ENCODE measurements at regions of chrX and their contacts with region 1.

Region 1: DNA sequence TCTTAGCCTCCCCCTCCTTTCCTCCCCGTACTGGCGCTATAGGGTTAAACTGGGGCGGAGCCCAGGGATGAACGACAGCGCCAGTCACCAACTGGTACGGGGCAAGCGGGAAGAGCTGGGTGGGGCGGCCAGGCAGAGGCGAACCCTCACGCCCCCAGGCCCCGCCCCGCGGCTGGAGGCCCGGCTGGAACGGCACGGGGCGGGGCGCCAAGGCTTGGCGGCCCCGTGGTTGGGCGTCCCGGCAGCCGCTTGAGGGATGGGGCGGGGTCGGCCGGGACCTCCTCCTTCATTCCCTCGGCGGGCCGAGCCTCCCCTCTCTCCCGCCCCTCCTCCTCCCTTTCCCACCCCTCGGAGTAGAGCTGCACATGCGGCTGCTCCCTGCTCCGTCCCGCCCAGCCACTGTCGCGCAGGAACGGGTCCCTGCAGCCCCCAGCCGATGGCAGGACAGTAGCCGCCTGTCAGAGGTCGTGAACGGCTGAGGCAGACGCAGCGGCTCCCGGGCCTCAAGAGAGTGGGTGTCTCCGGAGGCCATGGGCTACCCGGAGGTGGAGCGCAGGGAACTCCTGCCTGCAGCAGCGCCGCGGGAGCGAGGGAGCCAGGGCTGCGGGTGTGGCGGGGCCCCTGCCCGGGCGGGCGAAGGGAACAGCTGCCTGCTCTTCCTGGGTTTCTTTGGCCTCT is at the start of gene EDA:
- DNase-seq: peak; percentile 60 to 72
- ATAC-seq: peak; percentile 87 to 88
- H3K4me3 ChIP-seq: peak within 1 kb of the TSS; percentile 66 to 84 (median 73)
- H3K27ac ChIP-seq: peak within 1 kb of the TSS; percentile 47 to 69 (median 56)
- H3K4me1 ChIP-seq: peaks cover 3 to 5% of the 10 kb centered on the region in 2 donors
- H3K27me3 ChIP-seq: no peaks in the 10 kb centered on the region
- CTCF ChIP-seq: no peak
- POLR2A ChIP-seq: no peak
- total RNA-seq, gene EDA: 0.51 to 3.3 (median 1.3) TPM

Region 2: DNA sequence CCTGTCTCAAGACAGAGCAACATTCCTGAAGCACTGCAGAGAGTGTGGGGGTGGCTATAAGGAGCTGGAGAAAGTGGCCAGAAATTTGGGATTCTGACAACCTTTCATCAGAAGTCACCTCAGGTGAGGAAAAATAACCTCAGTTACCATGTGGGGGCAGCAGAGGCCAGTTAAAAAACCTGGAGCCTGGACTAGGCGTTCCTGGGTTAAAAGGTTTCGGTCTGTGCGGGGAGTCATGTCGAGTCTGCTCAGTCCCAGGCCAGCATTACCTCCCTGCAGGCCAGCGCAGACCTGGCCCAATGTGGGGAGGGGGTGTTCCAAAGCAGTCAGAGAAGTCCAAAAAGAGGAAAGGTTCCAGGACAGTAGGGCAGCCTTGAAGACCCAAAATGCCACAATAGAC is 122.7 kb before region 1 on chrX:
- in situ Hi-C with region 1: no loop called
- intact Hi-C with region 1: loop called (anchors 2 kb)
- DNase-seq: no peak
- ATAC-seq: no peak
- H3K4me3 ChIP-seq: no peak overlapping the region
- H3K27ac ChIP-seq: no peak overlapping the region
- H3K4me1 ChIP-seq: no peaks in the 10 kb centered on the region
- H3K27me3 ChIP-seq: no peaks in the 10 kb centered on the region
- CTCF ChIP-seq: peak in 3 of 5 experiments; percentile 25 to 41 (median 41)
- POLR2A ChIP-seq: no peak

Region 3: DNA sequence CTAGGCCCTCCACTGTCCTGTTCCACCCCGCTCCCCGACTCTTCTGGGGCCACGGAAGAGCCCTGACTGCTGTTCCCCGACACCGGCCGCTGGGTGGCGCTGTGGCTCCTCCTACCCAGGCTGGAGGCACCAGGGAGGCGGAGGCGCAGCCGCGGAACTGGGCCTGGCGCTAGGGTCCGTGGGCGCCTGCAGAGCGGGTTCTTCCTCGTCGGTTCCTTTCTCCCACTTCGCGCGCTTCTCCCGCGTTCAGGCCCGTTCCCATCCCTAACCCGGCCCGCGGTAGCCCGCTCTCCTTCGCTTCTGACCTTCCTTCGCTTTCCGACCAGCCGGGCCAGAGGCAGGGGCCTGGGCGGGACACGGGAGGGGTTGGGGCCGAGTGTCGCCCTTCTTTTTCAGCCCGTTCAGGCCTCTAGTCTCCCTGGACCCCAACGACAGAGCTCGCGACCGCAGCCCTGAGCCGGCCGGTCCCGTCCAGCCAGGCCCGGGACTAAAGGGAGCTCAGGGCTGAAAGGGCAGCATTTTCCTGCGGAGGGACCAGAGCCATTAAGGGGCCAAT is 77.5 kb before region 1 on chrX:
- in situ Hi-C with region 1: no loop called
- intact Hi-C with region 1: loop called (anchors 1 kb)
- DNase-seq: peak; percentile 23 to 43
- ATAC-seq: peak; percentile 78 to 80
- H3K4me3 ChIP-seq: peak overlapping the region; percentile 50 to 60 (median 53)
- H3K27ac ChIP-seq: no peak overlapping the region
- H3K4me1 ChIP-seq: no peaks in the 10 kb centered on the region
- H3K27me3 ChIP-seq: no peaks in the 10 kb centered on the region
- CTCF ChIP-seq: peak; percentile 62 to 80 (median 74)
- POLR2A ChIP-seq: no peak

Region 4: GRCh38 chrX:70030301-70030767 is 414.4 kb after region 1 on chrX:
- in situ Hi-C with region 1: no loop called
- intact Hi-C with region 1: loop called (anchors 10 kb)
- DNase-seq: peak in 1 of 2 donors; percentile 14
- ATAC-seq: peak; percentile 49 to 56
- H3K4me3 ChIP-seq: no peak overlapping the region
- H3K27ac ChIP-seq: no peak overlapping the region
- H3K4me1 ChIP-seq: no peaks in the 10 kb centered on the region
- H3K27me3 ChIP-seq: no peaks in the 10 kb centered on the region
- CTCF ChIP-seq: peak in 4 of 5 experiments; percentile 45 to 65 (median 61)
- POLR2A ChIP-seq: no peak

Region 5: GRCh38 chrX:70133303-70134115 is 517.6 kb after region 1 on chrX and contains the start of gene IGBP1:
- in situ Hi-C with region 1: no loop called
- intact Hi-C with region 1: loop called (anchors 1 kb)
- DNase-seq: peak; percentile 72 to 81
- ATAC-seq: peak; percentile 99
- H3K4me3 ChIP-seq: peak within 1 kb of the TSS; percentile 60 to 96 (median 86)
- H3K27ac ChIP-seq: peak within 1 kb of the TSS; percentile 71 to 90 (median 81)
- H3K4me1 ChIP-seq: peaks cover 5 to 7% of the 10 kb centered on the region in 2 donors
- H3K27me3 ChIP-seq: no peaks in the 10 kb centered on the region
- CTCF ChIP-seq: peak; percentile 34 to 68 (median 56)
- POLR2A ChIP-seq: peak; percentile 11 to 35
- total RNA-seq, gene IGBP1: 68.7 to 109 (median 75.1) TPM